Calu3 (cell line): ENCODE measurements at regions of chr10 and their contacts with region 1.

Region 1: DNA sequence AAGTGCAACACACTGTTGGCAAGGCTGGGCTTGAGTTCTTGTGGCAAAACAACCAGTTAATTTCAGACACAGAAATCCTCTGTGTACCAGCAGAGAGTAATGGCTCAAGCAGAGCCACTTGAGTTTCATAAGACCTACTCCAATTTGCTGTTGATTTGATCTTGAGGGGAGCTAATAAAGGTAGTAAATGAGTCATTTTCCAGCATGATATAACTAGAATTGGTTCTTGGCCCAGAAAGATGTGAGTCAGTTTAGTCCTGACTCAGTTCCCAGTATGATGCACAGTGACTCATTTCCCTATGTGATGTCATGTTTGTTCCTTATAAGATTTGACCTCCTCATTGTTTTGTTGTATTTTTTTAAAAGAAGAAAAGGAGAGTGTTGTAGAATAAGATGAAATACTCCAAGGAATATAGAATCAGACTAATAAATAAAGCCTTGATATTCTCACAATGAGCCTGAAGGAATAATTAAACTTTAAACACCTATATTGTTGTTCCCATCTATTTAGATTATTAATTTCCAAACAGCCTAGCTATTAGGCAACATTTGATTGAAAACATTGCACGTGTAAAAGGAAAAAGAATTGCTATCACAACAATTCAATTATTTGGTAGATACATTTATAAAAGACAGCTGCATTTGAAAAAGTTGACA is 186.2 kb downstream of the REEP3 start:
- DNase-seq: peak; percentile 61
- H3K4me3 Mint-ChIP-seq: no peak overlapping the region
- H3K27ac Mint-ChIP-seq: peak overlapping the region; percentile 87
- H3K4me1 Mint-ChIP-seq: peaks cover 77% of the 10 kb centered on the region
- H3K27me3 Mint-ChIP-seq: no peaks in the 10 kb centered on the region
- CTCF ChIP-seq: no peak

Region 2: GRCh38 chr10:63256009-63256773 is 451.2 kb before region 1 on chr10:
- CTCF ChIA-PET with region 1: no interaction called
- intact Hi-C with region 1: no loop called
- DNase-seq: no peak
- H3K4me3 Mint-ChIP-seq: no peak overlapping the region
- H3K27ac Mint-ChIP-seq: no peak overlapping the region
- H3K4me1 Mint-ChIP-seq: peaks cover 66% of the 10 kb centered on the region
- H3K27me3 Mint-ChIP-seq: no peaks in the 10 kb centered on the region
- CTCF ChIP-seq: no peak

Region 3: DNA sequence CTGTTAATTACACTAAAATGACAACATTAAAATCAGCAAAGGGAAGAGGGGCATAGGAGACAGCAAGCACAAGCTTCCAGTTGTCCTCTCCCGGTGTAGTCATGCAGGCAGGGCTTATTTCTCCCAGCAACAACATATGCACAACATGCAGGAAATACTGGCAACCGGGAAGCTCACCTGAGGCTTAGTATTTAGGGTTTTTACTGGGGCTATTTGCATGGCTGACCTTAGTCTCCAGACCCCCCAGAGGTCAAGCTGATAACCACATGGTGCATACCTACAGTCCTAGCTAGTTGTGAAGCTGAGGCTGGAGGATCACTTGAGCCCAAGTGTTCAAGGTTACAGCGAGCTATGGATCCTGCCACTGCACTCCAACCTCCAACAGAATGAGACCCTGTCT is 228.8 kb before region 1 on chr10:
- CTCF ChIA-PET with region 1: no interaction called
- intact Hi-C with region 1: no loop called
- DNase-seq: no peak
- H3K4me3 Mint-ChIP-seq: no peak overlapping the region
- H3K27ac Mint-ChIP-seq: no peak overlapping the region
- H3K4me1 Mint-ChIP-seq: no peaks in the 10 kb centered on the region
- H3K27me3 Mint-ChIP-seq: no peaks in the 10 kb centered on the region
- CTCF ChIP-seq: no peak

Region 4: GRCh38 chr10:63661347-63661746 is 46.0 kb before region 1 on chr10:
- CTCF ChIA-PET with region 1: interaction called, 10 read pairs
- intact Hi-C with region 1: no loop called
- DNase-seq: no peak
- H3K4me3 Mint-ChIP-seq: no peak overlapping the region
- H3K27ac Mint-ChIP-seq: no peak overlapping the region
- H3K4me1 Mint-ChIP-seq: no peaks in the 10 kb centered on the region
- H3K27me3 Mint-ChIP-seq: no peaks in the 10 kb centered on the region
- CTCF ChIP-seq: no peak

Region 5: DNA sequence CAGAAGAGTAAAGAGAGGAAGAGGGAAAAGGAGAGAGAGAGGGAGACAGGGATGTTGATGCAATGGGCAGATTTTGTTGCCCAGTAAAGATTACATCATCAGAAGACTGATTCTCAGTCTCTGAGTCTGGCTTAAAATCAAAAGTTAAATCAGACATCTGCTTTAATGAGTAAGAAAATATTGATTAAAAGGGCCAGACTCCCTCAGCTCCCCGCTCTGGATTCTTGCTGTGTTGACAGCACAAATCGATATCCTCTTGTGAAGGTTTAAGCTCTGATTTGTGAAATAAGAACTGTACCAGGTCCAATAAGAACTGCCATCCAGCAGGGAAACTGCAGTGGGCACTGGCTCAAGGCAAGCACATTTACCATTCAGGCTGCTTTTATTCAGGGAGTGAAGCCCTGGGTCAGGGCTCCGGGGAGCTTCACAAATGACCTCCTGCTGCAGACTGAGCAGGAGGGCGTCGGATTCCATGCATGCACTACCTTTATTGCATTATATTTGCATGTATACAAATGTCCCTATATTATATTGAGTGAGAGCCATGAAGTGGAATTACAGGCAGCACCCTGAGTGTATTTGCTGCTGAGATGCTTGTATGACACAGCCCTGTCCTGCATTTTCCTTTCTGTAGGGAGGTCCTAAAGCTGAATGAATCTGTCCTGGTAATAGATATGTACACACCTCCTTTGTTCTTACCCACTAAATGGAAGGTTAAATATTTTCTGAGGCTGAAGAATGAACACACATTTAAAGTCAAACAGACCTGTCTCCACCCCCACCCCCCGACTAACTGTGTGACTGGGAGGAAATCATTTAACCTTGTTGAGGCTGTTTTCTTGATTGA is 215.3 kb after region 1 on chr10:
- CTCF ChIA-PET with region 1: no interaction called
- intact Hi-C with region 1: no loop called
- DNase-seq: peak; percentile 18
- H3K4me3 Mint-ChIP-seq: no peak overlapping the region
- H3K27ac Mint-ChIP-seq: no peak overlapping the region
- H3K4me1 Mint-ChIP-seq: peaks cover 21% of the 10 kb centered on the region
- H3K27me3 Mint-ChIP-seq: no peaks in the 10 kb centered on the region
- CTCF ChIP-seq: no peak